Heart left ventricle (tissue), 16 donors: ENCODE measurements at regions of chr2 and their contacts with region 1.

Region 1: GRCh38 chr2:89000235-89000634 is 308.8 kb downstream of the RPIA start:
- DNase-seq: no peak
- ATAC-seq: no peak
- H3K4me3 ChIP-seq: no peak overlapping the region
- H3K27ac ChIP-seq: no peak overlapping the region
- H3K4me1 ChIP-seq: no peaks in the 10 kb centered on the region
- H3K27me3 ChIP-seq: peaks cover 0 to 9% (median 0%) of the 10 kb centered on the region in 9 donors
- CTCF ChIP-seq: no peak
- POLR2A ChIP-seq: no peak

Region 2: GRCh38 chr2:88321449-88322248 is 678.6 kb before region 1 on chr2:
- intact Hi-C with region 1: no loop called
- DNase-seq: no peak
- ATAC-seq: no peak
- H3K4me3 ChIP-seq: no peak overlapping the region
- H3K27ac ChIP-seq: no peak overlapping the region
- H3K4me1 ChIP-seq: no peaks in the 10 kb centered on the region
- H3K27me3 ChIP-seq: peaks cover 0 to 10% (median 0%) of the 10 kb centered on the region in 9 donors
- CTCF ChIP-seq: no peak
- POLR2A ChIP-seq: no peak

Region 3: GRCh38 chr2:88857951-88858411 is 142.3 kb before region 1 on chr2:
- intact Hi-C with region 1: no loop called
- DNase-seq: peak in 3 of 5 donors; percentile 19 to 29 (median 28)
- ATAC-seq: peak in 3 of 4 donors; percentile 16 to 73 (median 29)
- H3K4me3 ChIP-seq: no peak overlapping the region
- H3K27ac ChIP-seq: peak overlapping the region in 2 of 12 donors; percentile 19 to 33
- H3K4me1 ChIP-seq: peaks cover 0 to 12% (median 6%) of the 10 kb centered on the region in 12 donors
- H3K27me3 ChIP-seq: no peaks in the 10 kb centered on the region
- CTCF ChIP-seq: no peak
- POLR2A ChIP-seq: no peak

Region 4: GRCh38 chr2:88959480-88960220 is 40.6 kb before region 1 on chr2:
- intact Hi-C with region 1: no loop called
- DNase-seq: no peak
- ATAC-seq: no peak
- H3K4me3 ChIP-seq: no peak overlapping the region
- H3K27ac ChIP-seq: no peak overlapping the region
- H3K4me1 ChIP-seq: no peaks in the 10 kb centered on the region
- H3K27me3 ChIP-seq: peaks cover 0 to 39% (median 7%) of the 10 kb centered on the region in 9 donors
- CTCF ChIP-seq: peak in 2 of 12 donors; percentile 12 to 24
- POLR2A ChIP-seq: no peak

Region 5: GRCh38 chr2:90221300-90221651 is 1221.0 kb after region 1 on chr2:
- intact Hi-C with region 1: loop called in 1 of 10 experiments (anchors 10 kb)
- DNase-seq: no peak
- ATAC-seq: no peak
- H3K4me3 ChIP-seq: no peak overlapping the region
- H3K27ac ChIP-seq: no peak overlapping the region
- H3K4me1 ChIP-seq: no peaks in the 10 kb centered on the region
- H3K27me3 ChIP-seq: peaks cover 0 to 2% (median 0%) of the 10 kb centered on the region in 9 donors
- CTCF ChIP-seq: no peak
- POLR2A ChIP-seq: no peak